Left cardiac atrium (tissue), 4 donors: ENCODE measurements at regions of chr2 and their contacts with region 1.

Region 1: DNA sequence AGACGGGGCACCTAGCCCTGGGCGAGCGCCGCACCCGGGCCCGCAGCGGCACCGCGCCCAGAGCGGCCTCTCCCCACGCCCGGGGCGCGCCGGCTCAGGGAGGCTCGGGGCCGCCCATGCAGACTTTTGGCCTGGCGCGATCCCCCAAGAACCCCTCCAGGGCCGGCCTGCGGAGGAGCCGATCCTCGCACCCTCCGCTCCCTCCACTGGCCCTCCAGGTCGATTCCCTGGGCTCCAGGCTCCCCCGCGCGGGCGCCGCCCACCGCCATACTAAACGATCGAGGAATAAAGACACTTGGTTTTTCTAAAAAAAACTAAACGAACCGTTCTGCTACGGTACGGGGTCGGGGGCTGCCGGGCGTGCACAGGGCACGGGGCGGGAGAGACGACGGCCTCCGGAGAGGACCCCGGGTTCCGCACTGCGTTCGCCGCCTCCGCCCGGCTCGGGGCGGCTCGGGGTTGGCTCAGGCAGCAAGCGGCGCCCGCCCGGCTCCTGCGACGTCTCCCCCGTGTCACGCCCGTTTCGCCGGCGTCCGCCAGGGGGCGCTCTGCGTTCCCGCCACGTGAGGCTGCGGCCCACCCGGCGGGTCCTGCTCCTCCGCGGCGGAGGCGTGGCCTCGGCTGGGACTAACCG is 365 bp upstream of the KHK start:
- DNase-seq: peak; percentile 95
- ATAC-seq: peak; percentile 91 to 93

Region 2: DNA sequence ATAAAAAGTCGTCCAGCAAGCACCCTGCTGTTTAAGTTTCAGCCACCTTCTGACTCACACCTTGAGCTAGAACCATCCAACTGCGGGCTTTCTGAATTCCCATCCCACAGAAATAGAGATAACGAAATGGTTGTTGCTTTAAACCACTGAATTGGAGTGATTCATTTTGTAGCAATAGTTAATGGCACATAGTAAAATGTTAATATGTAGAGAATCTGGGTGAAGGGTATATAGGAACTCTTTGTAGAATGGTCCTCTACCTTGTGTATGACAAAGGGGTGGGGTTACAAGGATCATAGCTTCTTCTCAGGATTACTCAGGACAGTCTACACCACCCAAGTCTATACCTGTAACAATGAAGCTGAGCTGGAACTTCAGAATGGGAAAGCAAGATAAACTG is 118.2 kb before region 1 on chr2:
- intact Hi-C with region 1: loop called (anchors 2 to 10 kb)
- DNase-seq: no peak
- ATAC-seq: no peak

Region 3: GRCh38 chr2:27032495-27033252 is 53.5 kb before region 1 on chr2 and contains the start of gene TMEM214:
- intact Hi-C with region 1: loop called (anchors 10 kb)
- DNase-seq: peak; percentile 93
- ATAC-seq: peak; percentile 98 to 99
- total RNA-seq, gene TMEM214: 39.1 to 66.5 TPM

Region 4: GRCh38 chr2:27050281-27050995 is 35.8 kb before region 1 on chr2:
- intact Hi-C with region 1: loop called in 1 of 2 experiments (anchors 2 kb)
- DNase-seq: peak; percentile 84
- ATAC-seq: peak; percentile 84 to 85